AG04449 (cell line): ENCODE measurements at regions of chr5 and their contacts with region 1.

Region 1: GRCh38 chr5:141564216-141564692 is 54.5 kb downstream of the DIAPH1 start:
- DNase-seq: peak; percentile 88
- H3K4me3 ChIP-seq: no peak overlapping the region
- CTCF ChIP-seq: peak; percentile 56

Region 2: DNA sequence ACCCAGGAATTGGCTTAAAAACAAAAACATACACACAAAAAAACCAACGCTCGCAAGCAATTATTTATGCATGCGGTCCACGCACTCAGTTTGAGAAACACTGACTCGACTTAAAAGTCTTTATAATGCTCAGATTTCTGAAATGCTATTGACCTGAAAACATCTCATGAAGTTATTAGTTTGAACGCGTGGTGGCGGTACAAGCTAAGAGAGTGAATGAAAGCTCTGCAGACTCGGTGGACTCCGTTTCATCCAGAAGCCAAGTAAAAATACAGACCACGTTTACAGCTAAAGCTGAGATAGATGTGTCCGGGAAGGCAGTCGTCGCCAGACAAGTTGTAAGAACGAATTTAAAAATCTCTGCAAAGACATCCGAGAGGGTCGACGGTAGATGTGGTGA is 414.4 kb before region 1 on chr5 and contains the start of gene PCDHB6:
- CTCF ChIA-PET with region 1: interaction called, 10 read pairs
- POLR2A ChIA-PET with region 1: no interaction called
- DNase-seq: no peak
- H3K4me3 ChIP-seq: no peak within 1 kb of the TSS; the same call in 1 of the 2 replicates
- CTCF ChIP-seq: no peak

Region 3: GRCh38 chr5:141199359-141200235 is 364.7 kb before region 1 on chr5 and contains the start of gene PCDHB11:
- CTCF ChIA-PET with region 1: interaction called, 15 read pairs
- POLR2A ChIA-PET with region 1: no interaction called
- DNase-seq: no peak
- H3K4me3 ChIP-seq: no peak within 1 kb of the TSS
- CTCF ChIP-seq: no peak

Region 4: DNA sequence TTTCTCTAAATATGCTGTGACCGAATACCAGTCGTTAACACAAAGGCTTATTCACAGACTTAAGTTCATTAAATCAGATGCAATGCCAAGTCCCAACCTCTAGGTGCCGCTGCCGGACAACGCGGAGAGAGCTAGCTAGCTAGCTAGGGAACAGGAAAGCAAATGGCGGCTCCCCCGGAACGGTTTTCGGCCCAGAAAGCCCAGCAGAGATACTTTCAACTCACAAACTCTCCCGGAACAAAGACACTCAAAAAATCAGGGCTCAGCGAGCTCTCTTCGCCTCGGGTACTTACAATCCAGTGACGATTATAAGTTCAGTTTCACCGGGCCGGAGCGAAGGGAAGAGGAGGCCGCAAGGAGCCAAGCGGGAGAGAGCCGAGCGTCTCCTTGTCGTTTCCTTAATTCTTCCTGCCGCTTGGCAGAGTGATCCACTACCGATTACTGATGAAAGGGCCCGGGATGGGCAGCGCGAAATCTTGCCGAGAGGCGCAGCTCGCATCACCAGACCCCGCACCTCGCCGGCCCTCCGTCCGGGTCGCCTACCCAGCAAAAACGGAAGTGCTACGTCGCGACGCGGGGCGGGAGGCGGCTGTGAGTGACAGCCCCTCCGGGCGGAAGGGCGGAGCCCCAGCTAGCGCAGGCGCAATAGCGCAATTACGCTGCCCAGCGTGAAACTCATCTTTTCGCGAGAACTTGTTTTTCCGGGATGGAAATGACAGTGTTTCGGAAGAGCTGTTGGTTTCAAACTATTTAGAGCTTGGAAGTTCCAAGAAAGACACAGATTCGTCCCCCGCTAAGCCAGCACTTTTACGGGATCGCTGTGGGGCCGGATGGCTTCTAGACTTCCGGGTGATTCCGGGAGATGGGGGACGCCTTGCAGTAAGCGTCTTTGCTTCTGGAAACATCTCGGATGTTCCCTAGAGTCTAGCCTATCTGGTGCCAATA is 243.8 kb before region 1 on chr5 and contains the start of gene TAF7:
- CTCF ChIA-PET with region 1: interaction called, 209 read pairs
- POLR2A ChIA-PET with region 1: interaction called, 3 read pairs
- DNase-seq: peak; percentile 63
- H3K4me3 ChIP-seq: peak within 1 kb of the TSS; percentile 85
- CTCF ChIP-seq: peak; percentile 82

Region 5: GRCh38 chr5:141359790-141360426 is 204.3 kb before region 1 on chr5 and contains the start of gene PCDHGB2:
- CTCF ChIA-PET with region 1: interaction called, 37 read pairs
- POLR2A ChIA-PET with region 1: no interaction called
- DNase-seq: no peak
- H3K4me3 ChIP-seq: peak within 1 kb of the TSS; percentile 53
- CTCF ChIP-seq: peak; percentile 15

Region 6: GRCh38 chr5:141412854-141413539 is 151.3 kb before region 1 on chr5 and contains the start of gene PCDHGA10:
- CTCF ChIA-PET with region 1: interaction called, 303 read pairs
- POLR2A ChIA-PET with region 1: interaction called, 5 read pairs
- DNase-seq: no peak
- H3K4me3 ChIP-seq: peak within 1 kb of the TSS; percentile 53
- CTCF ChIP-seq: peak; percentile 48

Region 7: GRCh38 chr5:141524604-141525597 is 39.4 kb before region 1 on chr5:
- CTCF ChIA-PET with region 1: interaction called, 125 read pairs
- POLR2A ChIA-PET with region 1: no interaction called
- DNase-seq: peak; percentile 76
- H3K4me3 ChIP-seq: peak overlapping the region; percentile 29
- CTCF ChIP-seq: peak; percentile 97

Region 8: GRCh38 chr5:141778206-141778605 is 214.0 kb after region 1 on chr5:
- CTCF ChIA-PET with region 1: no interaction called
- POLR2A ChIA-PET with region 1: no interaction called
- DNase-seq: peak; percentile 19
- H3K4me3 ChIP-seq: no peak overlapping the region
- CTCF ChIP-seq: no peak

Region 9: DNA sequence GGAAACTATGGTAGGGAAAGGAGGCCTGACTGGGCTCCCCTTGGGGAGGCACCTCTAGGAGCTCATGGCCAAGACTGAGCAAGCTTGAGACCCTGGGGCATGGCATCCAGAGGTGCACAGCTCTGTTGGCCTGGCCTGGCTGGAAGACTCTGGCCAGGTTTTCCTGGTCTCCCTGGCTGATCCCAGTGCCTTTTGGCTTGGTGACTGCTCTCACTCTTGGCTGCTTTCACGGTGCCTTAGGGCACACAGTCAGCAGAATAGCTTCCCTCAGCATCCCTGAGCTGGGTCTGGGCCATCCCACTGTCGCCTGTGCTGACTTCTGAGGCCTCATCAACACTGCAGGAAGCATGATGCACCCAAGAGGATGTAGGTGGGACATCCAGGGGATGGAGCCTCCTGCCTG is 346.0 kb after region 1 on chr5:
- CTCF ChIA-PET with region 1: no interaction called
- POLR2A ChIA-PET with region 1: no interaction called
- DNase-seq: no peak
- H3K4me3 ChIP-seq: no peak overlapping the region
- CTCF ChIP-seq: no peak